PC-3 (cell line): ENCODE measurements at regions of chr12 and their contacts with region 1.

Region 1: DNA sequence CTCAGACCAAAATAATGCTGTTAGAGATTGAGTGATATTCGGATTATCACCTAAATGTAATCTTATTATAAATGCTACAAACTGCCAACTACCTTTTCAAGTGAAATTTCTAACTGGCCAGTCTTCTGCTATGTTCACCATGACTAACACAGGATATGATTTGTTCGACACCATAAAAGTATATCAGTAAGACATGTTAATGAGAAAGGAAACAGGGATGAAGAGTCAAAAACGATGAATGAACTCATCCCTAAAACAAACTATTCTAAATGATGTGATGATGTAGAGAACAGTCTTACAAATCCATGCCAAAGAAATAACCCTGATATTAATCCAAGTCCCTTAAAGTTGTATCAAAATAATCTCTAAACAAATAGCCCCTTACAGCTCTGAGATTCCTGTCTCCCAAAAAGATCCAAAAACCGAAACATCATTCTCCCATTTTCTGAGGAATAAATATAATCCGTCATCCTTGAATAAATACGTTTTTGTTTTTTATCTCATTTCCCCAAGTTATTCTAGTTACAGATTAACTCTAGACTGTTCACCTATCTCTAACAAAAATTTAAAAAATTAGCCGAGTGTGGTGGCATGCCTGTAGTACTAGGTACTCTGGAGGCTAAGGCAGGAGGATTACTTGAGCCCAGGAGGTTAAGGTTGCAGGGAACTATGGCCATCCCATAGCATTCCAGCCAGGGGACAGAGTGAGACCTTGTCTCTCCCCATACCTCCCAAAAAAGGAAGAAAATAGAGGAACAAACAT is 9.1 kb downstream of the SCAF11 start:
- DNase-seq: peak; percentile 8
- ATAC-seq: peak; percentile 61
- H3K4me3 ChIP-seq: no peak overlapping the region
- H3K27ac ChIP-seq: 0 out of 2 replicates have a peak overlapping the region, but pooled peaks have one; percentile 14
- H3K4me1 ChIP-seq: peaks cover 6% of the 10 kb centered on the region; the same call in 1 of the 2 replicates
- H3K27me3 ChIP-seq: no peaks in the 10 kb centered on the region
- CTCF ChIP-seq: no peak

Region 2: GRCh38 chr12:45944771-45945170 is 36.5 kb before region 1 on chr12:
- CTCF ChIA-PET with region 1: no interaction called
- POLR2A ChIA-PET with region 1: no interaction called
- intact Hi-C with region 1: loop called (anchors 5 kb)
- DNase-seq: no peak
- ATAC-seq: no peak
- H3K4me3 ChIP-seq: no peak overlapping the region
- H3K27ac ChIP-seq: no peak overlapping the region
- H3K4me1 ChIP-seq: peaks cover 12% of the 10 kb centered on the region
- H3K27me3 ChIP-seq: no peaks in the 10 kb centered on the region
- CTCF ChIP-seq: no peak